CD4-positive, alpha-beta T cell (primary cell): ENCODE measurements at regions of chr14 and their contacts with region 1.

Region 1: DNA sequence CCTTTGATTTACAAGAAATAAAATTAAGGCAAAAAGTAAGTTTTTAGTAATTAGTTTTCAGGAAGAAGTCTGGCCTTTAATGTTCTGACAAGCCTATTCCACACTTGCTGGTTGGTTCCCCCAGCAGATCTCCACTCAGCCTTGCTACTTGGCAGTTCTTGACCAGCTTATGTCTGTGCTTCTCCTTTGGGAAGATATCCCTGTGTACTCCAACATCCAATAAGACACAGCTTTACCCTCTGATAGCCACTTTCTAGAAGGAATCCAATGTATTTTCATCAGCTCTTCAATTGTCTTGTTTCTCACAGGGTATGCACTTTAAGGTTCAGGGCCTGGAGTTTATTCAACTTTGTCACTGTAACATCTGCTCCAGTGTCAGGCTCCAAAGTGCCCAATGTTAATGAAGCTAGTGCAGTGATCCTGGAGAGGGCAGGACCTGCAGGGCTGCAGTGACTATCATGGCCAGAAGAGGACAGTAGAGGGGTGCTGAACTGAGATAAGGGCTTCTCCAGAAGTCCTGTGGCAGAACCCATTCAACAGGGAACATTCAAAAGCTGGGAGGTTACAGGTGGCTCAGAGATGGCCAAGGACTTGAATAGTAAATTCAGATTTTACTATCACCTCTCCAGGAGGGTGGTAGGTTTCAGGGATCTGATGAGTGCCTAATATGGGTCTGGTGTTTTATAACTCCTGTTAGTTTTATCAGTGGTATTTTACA is 22.9 kb downstream of the JKAMP start:
- DNase-seq: peak in 13 of 14 experiments; percentile 11 to 64 (median 32)
- ATAC-seq: peak; percentile 87
- H3K4me3 ChIP-seq: no peak overlapping the region
- H3K4me3 Mint-ChIP-seq: no peak overlapping the region
- H3K27ac ChIP-seq: no peak overlapping the region
- H3K27ac Mint-ChIP-seq: no peak overlapping the region
- H3K4me1 ChIP-seq: no peaks in the 10 kb centered on the region
- H3K4me1 Mint-ChIP-seq: peaks cover 17% of the 10 kb centered on the region
- H3K27me3 ChIP-seq: peaks cover 3 to 7% of the 10 kb centered on the region in 2 experiments
- H3K27me3 Mint-ChIP-seq: peaks cover 6% of the 10 kb centered on the region
- CTCF ChIP-seq: peak; percentile 71

Region 2: DNA sequence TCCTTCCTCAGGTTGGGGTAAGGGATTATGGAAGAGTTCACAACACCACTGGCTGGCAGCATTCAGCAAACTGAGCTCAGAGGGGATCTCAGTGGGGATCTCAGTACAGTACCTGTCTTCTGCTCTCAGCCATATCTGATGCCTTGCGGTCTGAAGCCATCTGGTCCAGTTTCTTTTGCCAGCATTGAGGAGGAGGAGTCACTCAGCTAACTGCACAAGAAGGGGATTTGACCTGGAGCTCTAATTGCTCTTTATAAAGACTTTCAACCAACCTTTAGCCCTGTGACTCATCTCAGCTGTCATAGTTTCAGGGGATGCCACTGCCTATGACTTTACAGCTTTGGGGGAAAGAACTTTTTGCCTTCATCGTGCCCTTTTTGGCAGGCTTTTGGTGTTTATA is 22.0 kb after region 1 on chr14:
- CTCF ChIA-PET with region 1: no interaction called
- POLR2A ChIA-PET with region 1: no interaction called
- intact Hi-C with region 1: loop called in 1 of 2 experiments (anchors 2 kb)
- DNase-seq: no peak
- ATAC-seq: no peak
- H3K4me3 ChIP-seq: no peak overlapping the region
- H3K4me3 Mint-ChIP-seq: no peak overlapping the region
- H3K27ac ChIP-seq: no peak overlapping the region
- H3K27ac Mint-ChIP-seq: no peak overlapping the region
- H3K4me1 ChIP-seq: no peaks in the 10 kb centered on the region
- H3K4me1 Mint-ChIP-seq: no peaks in the 10 kb centered on the region
- H3K27me3 ChIP-seq: peaks cover 4 to 5% of the 10 kb centered on the region in 2 experiments
- H3K27me3 Mint-ChIP-seq: peaks cover 58% of the 10 kb centered on the region
- CTCF ChIP-seq: no peak

Region 3: DNA sequence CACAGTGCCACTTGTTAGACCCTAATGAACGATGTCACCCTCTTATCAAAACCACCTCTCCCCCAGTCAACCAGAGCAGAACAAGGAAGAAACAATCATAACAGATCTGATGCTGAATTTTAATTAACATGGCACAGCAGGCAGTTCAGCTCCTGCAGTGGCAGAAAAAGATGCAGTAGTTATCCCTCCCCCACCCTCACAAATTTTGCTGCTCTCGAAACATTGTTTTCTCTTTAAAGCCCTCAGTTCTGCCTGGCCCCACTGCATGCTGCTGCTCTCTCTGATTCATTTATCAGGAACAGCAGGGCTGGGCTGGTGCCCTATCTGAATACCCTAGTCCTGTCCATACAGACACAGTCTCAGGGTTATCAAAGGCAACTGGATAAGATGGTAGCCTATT is 57.1 kb after region 1 on chr14:
- CTCF ChIA-PET with region 1: no interaction called
- POLR2A ChIA-PET with region 1: no interaction called
- intact Hi-C with region 1: no loop called
- DNase-seq: no peak
- ATAC-seq: no peak
- H3K4me3 ChIP-seq: no peak overlapping the region
- H3K4me3 Mint-ChIP-seq: no peak overlapping the region
- H3K27ac ChIP-seq: no peak overlapping the region
- H3K27ac Mint-ChIP-seq: no peak overlapping the region
- H3K4me1 ChIP-seq: no peaks in the 10 kb centered on the region
- H3K4me1 Mint-ChIP-seq: no peaks in the 10 kb centered on the region
- H3K27me3 ChIP-seq: peaks cover 0 to 20% of the 10 kb centered on the region in 2 experiments
- H3K27me3 Mint-ChIP-seq: peaks cover 25% of the 10 kb centered on the region
- CTCF ChIP-seq: no peak

Region 4: DNA sequence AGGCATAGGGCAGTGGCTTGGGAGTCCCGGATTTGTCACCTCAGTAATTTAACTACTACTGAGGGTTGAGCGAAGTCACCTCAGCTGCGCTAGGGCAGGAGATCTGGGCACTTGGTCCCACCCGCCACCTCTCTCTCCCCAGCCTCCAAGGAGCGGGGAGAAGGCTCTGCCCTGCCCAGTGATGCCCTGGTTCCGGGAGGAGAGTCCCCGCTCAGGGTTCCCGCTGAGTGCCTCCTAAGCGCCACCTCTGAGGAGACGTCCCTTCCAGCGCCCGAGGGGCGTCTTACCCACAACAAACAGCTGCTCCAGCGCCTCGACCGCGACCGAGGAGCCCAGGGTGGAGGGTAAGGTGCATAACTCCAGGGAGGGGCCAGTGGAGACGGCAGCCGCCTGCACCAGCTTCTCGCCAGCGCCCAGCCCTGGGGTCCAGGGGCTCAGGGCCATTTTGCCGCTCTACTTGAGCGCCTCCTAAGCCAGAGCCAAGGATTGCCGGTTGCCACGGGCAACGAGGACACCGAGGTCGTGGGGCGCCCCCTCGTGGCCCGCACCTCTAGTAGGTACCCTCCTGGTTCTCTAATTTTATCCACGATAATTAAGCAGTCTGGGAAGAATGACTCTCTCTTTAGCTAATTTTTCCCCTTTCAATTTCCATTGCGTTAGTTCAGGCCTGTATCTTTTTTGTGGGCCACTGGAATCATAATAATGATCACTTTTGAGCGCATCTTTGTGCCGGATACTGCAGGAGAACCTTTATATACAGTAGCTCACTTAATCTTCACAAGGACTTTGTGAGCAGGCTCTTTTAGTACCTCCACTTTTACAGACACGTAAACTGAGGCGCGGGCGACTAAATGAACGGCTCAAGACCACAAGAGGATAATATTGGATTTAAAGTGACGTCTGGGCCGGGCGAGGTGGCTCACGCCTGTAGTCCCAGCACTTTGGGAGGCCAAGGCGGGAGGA is 69.4 kb after region 1 on chr14 and contains the start of gene CCDC175:
- CTCF ChIA-PET with region 1: interaction called, 6 read pairs
- POLR2A ChIA-PET with region 1: no interaction called
- intact Hi-C with region 1: loop called in 1 of 2 experiments (anchors 5 kb)
- DNase-seq: peak; percentile 64 to 93 (median 78)
- ATAC-seq: peak; percentile 98
- H3K4me3 ChIP-seq: peak within 1 kb of the TSS; percentile 62
- H3K4me3 Mint-ChIP-seq: peak within 1 kb of the TSS; percentile 68
- H3K27ac ChIP-seq: no peak within 1 kb of the TSS
- H3K27ac Mint-ChIP-seq: no peak within 1 kb of the TSS
- H3K4me1 ChIP-seq: peaks cover 9% of the 10 kb centered on the region
- H3K4me1 Mint-ChIP-seq: peaks cover 6% of the 10 kb centered on the region
- H3K27me3 ChIP-seq: peaks cover 6 to 8% of the 10 kb centered on the region in 2 experiments
- H3K27me3 Mint-ChIP-seq: peaks cover 34% of the 10 kb centered on the region
- CTCF ChIP-seq: peak; percentile 87
- total RNA-seq, gene CCDC175: not detected

Region 5: DNA sequence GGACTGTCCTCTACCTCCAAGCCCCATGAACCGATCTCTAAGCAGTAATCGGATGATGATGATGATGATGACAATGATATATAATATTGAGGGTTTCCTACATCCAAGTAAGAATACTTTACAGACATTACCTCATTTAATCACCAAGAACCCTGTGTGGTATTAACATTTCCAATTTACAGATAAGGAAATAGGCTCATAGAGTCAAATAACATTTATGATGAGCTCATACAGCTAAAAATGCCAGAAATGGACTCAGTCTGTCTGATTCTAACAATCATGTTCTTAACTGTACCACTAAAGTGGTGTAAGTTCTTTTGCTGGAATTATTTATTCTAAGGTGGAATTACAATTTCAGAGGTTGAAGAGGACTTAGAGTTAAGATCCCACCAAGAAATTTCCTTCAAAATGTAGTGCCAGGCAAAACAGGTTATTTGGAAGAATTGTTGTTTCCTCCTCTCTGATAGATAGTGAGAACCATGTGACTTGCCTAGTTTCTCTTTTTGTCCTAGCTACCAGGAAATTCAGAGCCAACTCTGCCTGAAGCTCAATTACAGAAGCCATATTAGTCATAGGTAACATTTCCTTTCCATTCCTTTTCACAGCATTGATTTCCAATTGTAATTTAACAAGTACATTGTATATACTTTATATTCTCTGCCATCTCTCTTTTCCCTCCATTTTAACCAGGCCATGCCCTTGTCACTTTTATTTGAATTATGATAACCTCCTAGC is 93.2 kb after region 1 on chr14:
- CTCF ChIA-PET with region 1: no interaction called
- POLR2A ChIA-PET with region 1: no interaction called
- intact Hi-C with region 1: no loop called
- DNase-seq: no peak
- ATAC-seq: no peak
- H3K4me3 ChIP-seq: no peak overlapping the region
- H3K4me3 Mint-ChIP-seq: no peak overlapping the region
- H3K27ac ChIP-seq: no peak overlapping the region
- H3K27ac Mint-ChIP-seq: no peak overlapping the region
- H3K4me1 ChIP-seq: no peaks in the 10 kb centered on the region
- H3K4me1 Mint-ChIP-seq: no peaks in the 10 kb centered on the region
- H3K27me3 ChIP-seq: no peaks in the 10 kb centered on the region
- H3K27me3 Mint-ChIP-seq: peaks cover 15% of the 10 kb centered on the region
- CTCF ChIP-seq: no peak

Region 6: GRCh38 chr14:59787045-59787674 is 279.9 kb after region 1 on chr14:
- CTCF ChIA-PET with region 1: no interaction called
- POLR2A ChIA-PET with region 1: no interaction called
- intact Hi-C with region 1: no loop called
- DNase-seq: no peak
- ATAC-seq: no peak
- H3K4me3 ChIP-seq: no peak overlapping the region
- H3K4me3 Mint-ChIP-seq: no peak overlapping the region
- H3K27ac ChIP-seq: no peak overlapping the region
- H3K27ac Mint-ChIP-seq: no peak overlapping the region
- H3K4me1 ChIP-seq: no peaks in the 10 kb centered on the region
- H3K4me1 Mint-ChIP-seq: no peaks in the 10 kb centered on the region
- H3K27me3 ChIP-seq: no peaks in the 10 kb centered on the region
- H3K27me3 Mint-ChIP-seq: peaks cover 7% of the 10 kb centered on the region
- CTCF ChIP-seq: no peak